OCI-LY7 (cell line): ENCODE measurements at regions of chr7 and their contacts with region 1.

Region 1: DNA sequence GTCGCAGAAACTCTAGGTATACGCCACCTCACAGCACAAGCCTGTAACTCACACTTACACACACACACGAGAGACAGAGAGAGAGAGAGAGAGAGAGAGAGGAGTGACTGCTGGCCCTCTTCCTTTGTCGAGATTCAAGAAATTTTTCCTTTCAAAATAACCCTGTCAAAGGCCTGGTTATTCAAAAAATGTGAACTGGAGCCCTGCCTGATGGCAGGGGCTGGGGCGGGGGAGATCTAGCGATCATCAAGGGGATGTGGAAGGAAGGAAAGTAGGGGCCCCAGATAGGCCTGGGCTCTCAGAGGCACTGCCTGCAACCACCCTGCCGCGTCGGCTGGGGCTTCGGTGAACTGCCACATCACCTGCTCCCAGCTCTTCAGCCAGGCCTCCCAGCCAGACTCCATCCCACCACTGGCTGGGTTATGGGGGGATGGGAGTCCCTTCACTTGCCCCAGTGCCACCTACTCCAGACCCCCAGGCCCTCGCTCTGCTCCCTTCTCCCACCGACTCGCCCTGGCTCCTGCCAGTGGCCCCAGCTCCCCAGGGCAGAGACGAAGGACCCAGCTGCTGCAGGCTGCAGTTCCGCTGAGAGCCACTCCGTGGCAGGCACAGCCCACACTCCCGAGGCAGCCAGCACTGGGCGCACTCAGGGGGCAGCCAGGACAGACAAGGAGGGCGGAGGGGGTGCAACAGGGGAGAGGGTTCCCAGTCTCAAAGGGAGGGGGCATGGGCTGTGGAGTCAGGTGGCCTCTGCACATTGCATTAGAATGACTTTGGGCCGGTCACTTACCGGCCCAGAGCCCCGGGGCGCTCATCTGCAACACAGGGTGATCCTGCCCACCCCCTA is 15.3 kb downstream of the KCNH2 start:
- DNase-seq: peak; percentile 72
- H3K4me3 ChIP-seq: no peak overlapping the region
- H3K27ac ChIP-seq: no peak overlapping the region
- H3K4me1 ChIP-seq: peaks cover 9% of the 10 kb centered on the region
- CTCF ChIP-seq: peak; percentile 91

Region 2: GRCh38 chr7:151008511-151009323 is 45.9 kb after region 1 on chr7:
- CTCF ChIA-PET with region 1: interaction called, 3 read pairs
- POLR2A ChIA-PET with region 1: no interaction called
- intact Hi-C with region 1: loop called (anchors 5 kb)
- DNase-seq: peak; percentile 73
- H3K4me3 ChIP-seq: peak overlapping the region; percentile 42
- H3K27ac ChIP-seq: no peak overlapping the region
- H3K4me1 ChIP-seq: peaks cover 7% of the 10 kb centered on the region
- CTCF ChIP-seq: peak; percentile 81

Region 3: GRCh38 chr7:151017953-151018420 is 55.2 kb after region 1 on chr7:
- CTCF ChIA-PET with region 1: no interaction called
- POLR2A ChIA-PET with region 1: interaction called, 3 read pairs
- intact Hi-C with region 1: loop called (anchors 1 kb)
- DNase-seq: peak; percentile 72
- H3K4me3 ChIP-seq: peak overlapping the region; percentile 44
- H3K27ac ChIP-seq: no peak overlapping the region
- H3K4me1 ChIP-seq: peaks cover 10% of the 10 kb centered on the region
- CTCF ChIP-seq: peak; percentile 90